Activated T-helper 1 cell treated with anti-CD3 and anti-CD28 coated beads, Interleukin-12 subunit alpha, Interleukin-12 subunit beta, Interleukin-2, Interleukin-4 antibody, amounts not matched to agents 30 ng/mL and 10 ng/mL and 1 ng/mL, durations not matched to agents 14 hours and 24 hours and 36 hours (primary cell): ENCODE measurements at regions of chr1 and their contacts with region 1.

Region 1: DNA sequence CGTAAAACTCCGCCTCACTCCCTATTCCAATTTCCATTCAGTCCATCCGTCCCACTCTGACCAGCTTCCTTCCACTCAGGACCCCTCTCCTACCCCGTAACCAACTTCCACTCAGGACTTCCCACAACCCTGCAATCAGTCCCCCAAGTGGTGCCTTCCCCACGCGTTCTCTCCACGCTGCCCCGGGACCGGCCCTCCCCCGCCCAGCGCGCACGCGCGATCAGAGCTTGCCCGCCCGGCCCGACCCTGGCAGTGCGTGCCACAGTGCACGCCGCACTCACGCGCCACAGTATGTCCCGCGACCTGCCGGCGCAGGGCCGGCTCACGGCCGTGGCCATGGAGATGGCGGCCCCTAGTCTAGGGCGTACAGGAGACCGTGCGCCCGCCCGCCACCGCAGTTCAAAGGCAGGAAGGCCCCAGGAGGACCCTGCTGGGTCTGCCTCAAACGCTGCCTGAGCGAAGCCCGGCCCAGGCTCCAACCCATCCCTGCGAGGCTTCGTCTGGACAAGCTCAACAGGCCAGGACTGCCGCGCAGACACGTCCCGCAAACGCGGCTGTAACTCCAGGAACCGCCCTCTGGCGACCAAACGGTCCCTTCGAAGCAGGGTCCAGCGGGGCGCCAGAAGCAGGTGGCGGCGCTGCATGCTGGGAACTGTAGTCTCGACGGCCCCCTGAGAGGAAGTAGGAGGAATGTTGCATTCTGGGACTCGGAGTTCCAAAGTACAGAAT is at the start of gene NDC1:
- DNase-seq: peak; percentile 86
- H3K4me3 Mint-ChIP-seq: peak within 1 kb of the TSS; percentile 100
- H3K27ac Mint-ChIP-seq: peak within 1 kb of the TSS; percentile 98
- H3K4me1 Mint-ChIP-seq: peaks cover 26% of the 10 kb centered on the region
- H3K27me3 Mint-ChIP-seq: peaks cover 4% of the 10 kb centered on the region
- total RNA-seq, gene NDC1: 33.2 and 38.2 TPM in 2 replicates

Region 2: GRCh38 chr1:53196485-53197270 is 641.4 kb before region 1 on chr1 and contains the start of gene CPT2:
- intact Hi-C with region 1: loop called (anchors 1 kb)
- DNase-seq: peak; percentile 92
- H3K4me3 Mint-ChIP-seq: peak within 1 kb of the TSS; percentile 95
- H3K27ac Mint-ChIP-seq: peak within 1 kb of the TSS; percentile 92
- H3K4me1 Mint-ChIP-seq: peaks cover 28% of the 10 kb centered on the region
- H3K27me3 Mint-ChIP-seq: no peaks in the 10 kb centered on the region
- total RNA-seq, gene CPT2: 18.5 and 19.4 TPM in 2 replicates

Region 3: DNA sequence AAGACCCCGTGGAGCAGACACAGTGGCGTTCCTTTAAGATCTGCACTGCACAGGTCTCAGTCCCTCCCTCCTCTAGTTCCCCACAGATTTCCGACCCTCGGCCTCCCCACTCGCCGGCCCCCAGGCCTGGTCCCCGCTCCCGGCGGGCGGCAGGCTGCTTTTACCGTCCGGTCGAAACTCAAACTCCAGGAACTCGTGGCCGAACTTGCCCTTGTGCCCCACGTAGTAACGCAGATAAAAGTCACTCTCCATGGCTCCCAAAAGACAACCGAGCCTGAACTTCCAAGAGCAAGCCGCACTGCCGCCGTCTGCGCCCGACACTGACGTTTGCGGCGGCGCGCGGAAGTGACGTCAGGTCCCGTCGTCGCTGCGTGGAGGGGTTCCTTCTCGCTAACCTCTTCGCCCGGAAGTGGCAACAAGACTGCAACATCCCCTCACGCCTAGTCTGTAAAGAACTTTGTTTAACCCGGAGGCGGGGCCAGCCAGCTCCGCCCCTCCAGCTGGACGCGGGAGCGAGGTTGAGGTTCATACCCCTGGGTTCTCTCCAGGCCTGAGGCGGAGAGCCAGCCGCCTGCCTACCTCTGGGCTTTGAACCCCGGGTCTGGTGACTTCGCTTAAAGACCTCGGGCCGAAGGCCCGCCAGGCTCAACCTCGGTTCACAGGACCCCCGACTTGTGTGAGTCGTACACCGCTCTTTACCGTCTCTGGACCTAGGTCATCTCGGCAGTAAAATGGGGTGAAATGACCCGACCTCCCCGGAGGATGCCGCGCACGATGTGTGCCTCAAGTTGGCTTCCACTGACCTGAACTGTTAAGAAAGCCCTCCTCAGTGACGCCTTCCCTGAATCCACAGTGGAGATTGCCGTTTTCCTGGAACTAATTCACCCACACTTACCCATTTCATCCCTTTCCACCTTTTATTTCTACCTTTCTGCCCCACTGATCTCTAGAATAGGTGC is 599.6 kb before region 1 on chr1 and contains the start of gene MAGOH:
- intact Hi-C with region 1: loop called (anchors 1 kb)
- DNase-seq: peak; percentile 93
- H3K4me3 Mint-ChIP-seq: peak within 1 kb of the TSS; percentile 97
- H3K27ac Mint-ChIP-seq: peak within 1 kb of the TSS; percentile 98
- H3K4me1 Mint-ChIP-seq: peaks cover 28% of the 10 kb centered on the region
- H3K27me3 Mint-ChIP-seq: no peaks in the 10 kb centered on the region
- total RNA-seq, gene MAGOH: 104 TPM in 2 replicates

Region 4: GRCh38 chr1:53470155-53470554 is 367.9 kb before region 1 on chr1:
- intact Hi-C with region 1: no loop called
- DNase-seq: no peak
- H3K4me3 Mint-ChIP-seq: no peak overlapping the region
- H3K27ac Mint-ChIP-seq: no peak overlapping the region
- H3K4me1 Mint-ChIP-seq: no peaks in the 10 kb centered on the region
- H3K27me3 Mint-ChIP-seq: peaks cover 6% of the 10 kb centered on the region

Region 5: DNA sequence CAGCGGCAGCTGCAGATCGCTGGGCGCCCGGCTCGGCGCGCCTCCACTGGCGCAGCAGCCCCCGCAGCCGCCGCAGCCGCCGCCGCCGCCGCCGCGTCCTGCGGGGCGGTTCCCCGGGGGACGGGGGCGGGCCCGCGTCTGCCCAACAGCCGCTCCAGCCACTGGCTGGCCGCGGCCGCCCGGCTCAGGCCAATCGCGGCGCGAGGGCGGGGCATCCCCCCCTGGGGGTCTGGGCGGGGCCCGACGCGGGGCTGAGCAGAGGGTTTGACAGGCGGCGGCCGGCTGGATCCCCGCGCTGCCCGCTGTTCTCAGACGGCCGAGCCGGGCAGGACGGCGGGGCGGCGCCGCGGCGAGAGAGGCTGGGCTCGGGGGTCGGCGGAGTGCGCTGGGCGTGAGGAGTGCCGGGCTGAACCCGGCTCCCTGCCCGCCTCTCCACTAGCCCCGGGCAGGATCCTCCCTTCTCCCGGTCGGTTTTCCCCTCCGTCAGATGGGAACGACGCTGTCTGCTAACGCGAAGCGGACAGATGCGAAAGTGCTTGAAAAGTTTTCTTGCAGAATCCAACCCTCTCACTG is 98.9 kb before region 1 on chr1 and contains the start of gene GLIS1:
- intact Hi-C with region 1: loop called (anchors 1 kb)
- DNase-seq: peak; percentile 62
- H3K4me3 Mint-ChIP-seq: peak within 1 kb of the TSS; percentile 49
- H3K27ac Mint-ChIP-seq: no peak within 1 kb of the TSS
- H3K4me1 Mint-ChIP-seq: no peaks in the 10 kb centered on the region
- H3K27me3 Mint-ChIP-seq: peaks cover 67% of the 10 kb centered on the region
- total RNA-seq, gene GLIS1: 0.05 TPM in 1 of 2 replicates, not detected in the other

Region 6: DNA sequence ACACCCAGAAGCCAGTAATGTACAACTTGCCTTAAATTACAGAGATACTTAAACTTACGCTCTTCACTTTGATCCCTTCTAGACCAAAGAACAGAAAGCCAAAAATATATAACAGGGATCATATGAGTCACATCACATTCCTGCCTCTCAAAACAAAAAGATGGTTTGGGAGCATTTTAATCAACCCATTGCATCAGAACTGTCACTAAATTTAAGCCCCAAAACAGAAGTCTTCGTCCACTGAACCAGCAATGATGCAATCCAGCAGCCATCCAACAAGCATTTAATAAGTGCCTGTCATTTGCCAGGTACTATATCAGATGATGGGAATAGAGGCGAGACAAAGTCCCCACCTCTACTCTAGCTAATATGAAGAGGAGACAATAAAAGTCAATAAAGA is 56.4 kb before region 1 on chr1:
- intact Hi-C with region 1: loop called (anchors 1 kb)
- DNase-seq: no peak
- H3K4me3 Mint-ChIP-seq: no peak overlapping the region
- H3K27ac Mint-ChIP-seq: no peak overlapping the region
- H3K4me1 Mint-ChIP-seq: peaks cover 31% of the 10 kb centered on the region
- H3K27me3 Mint-ChIP-seq: no peaks in the 10 kb centered on the region

Region 7: GRCh38 chr1:53959664-53960250 is 121.7 kb after region 1 on chr1:
- intact Hi-C with region 1: loop called (anchors 1 kb)
- DNase-seq: no peak
- H3K4me3 Mint-ChIP-seq: no peak overlapping the region
- H3K27ac Mint-ChIP-seq: no peak overlapping the region
- H3K4me1 Mint-ChIP-seq: peaks cover 13% of the 10 kb centered on the region
- H3K27me3 Mint-ChIP-seq: no peaks in the 10 kb centered on the region

Region 8: GRCh38 chr1:54715493-54716298 is 877.6 kb after region 1 on chr1 and contains the start of gene TTC4:
- intact Hi-C with region 1: loop called (anchors 1 kb)
- DNase-seq: peak; percentile 84
- H3K4me3 Mint-ChIP-seq: peak within 1 kb of the TSS; percentile 94
- H3K27ac Mint-ChIP-seq: peak within 1 kb of the TSS; percentile 77
- H3K4me1 Mint-ChIP-seq: peaks cover 31% of the 10 kb centered on the region
- H3K27me3 Mint-ChIP-seq: peaks cover 6% of the 10 kb centered on the region
- total RNA-seq, gene TTC4: 43.7 TPM in 2 replicates